ENCODE measurements at regions of chr1 and their contacts with region 1.

Region 1: DNA sequence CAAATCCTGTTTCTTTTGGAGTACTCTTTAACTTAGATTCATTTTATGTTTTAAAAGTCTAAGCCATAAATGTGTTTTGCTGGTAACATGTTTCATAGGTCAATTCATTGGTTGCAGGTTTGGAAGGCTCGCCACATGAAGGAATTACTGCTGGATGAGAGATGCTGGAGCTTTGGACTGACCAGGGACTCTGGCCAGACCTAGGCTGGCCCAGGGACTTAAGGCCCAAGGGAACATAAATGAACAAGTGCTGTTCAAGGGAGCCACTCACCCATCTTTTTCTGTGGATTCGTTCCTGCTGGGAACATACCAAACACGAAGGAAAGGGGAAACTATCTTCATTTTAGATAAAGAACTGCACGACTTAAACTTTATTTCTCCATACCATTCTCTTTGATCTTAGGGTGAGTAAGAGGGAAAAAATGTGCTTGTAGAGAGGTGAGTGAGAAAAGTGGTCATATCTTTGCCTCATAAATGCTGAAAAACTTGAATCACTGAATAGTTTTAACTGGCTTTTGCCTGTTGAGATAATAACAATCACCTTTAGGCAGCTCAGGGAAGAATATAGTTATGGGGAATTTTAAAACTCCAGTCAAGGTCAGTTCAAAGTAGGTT is 15.3 kb upstream of the SHCBP1L start:
- DNase-seq: no peak
- ATAC-seq: no peak
- H3K4me3 ChIP-seq: no peak overlapping the region
- H3K27ac ChIP-seq: no peak overlapping the region
- H3K4me1 ChIP-seq: peaks cover 0 to 2% (median 0%) of the 10 kb centered on the region in 12 donors
- H3K27me3 ChIP-seq: no peaks in the 10 kb centered on the region
- CTCF ChIP-seq: no peak
- POLR2A ChIP-seq: no peak

Region 2: GRCh38 chr1:182768963-182769362 is 199.3 kb before region 1 on chr1:
- intact Hi-C with region 1: no loop called
- DNase-seq: no peak
- ATAC-seq: peak in 1 of 4 donors; percentile 60
- H3K4me3 ChIP-seq: no peak overlapping the region
- H3K27ac ChIP-seq: peak overlapping the region in 3 of 12 donors; percentile 30 to 39 (median 32)
- H3K4me1 ChIP-seq: peaks cover 0 to 20% (median 0%) of the 10 kb centered on the region in 12 donors
- H3K27me3 ChIP-seq: no peaks in the 10 kb centered on the region
- CTCF ChIP-seq: no peak
- POLR2A ChIP-seq: no peak

Region 3: GRCh38 chr1:183012301-183012994 is 44.2 kb after region 1 on chr1:
- intact Hi-C with region 1: no loop called
- DNase-seq: no peak
- ATAC-seq: no peak
- H3K4me3 ChIP-seq: no peak overlapping the region
- H3K27ac ChIP-seq: no peak overlapping the region
- H3K4me1 ChIP-seq: peaks cover 0 to 7% (median 0%) of the 10 kb centered on the region in 12 donors
- H3K27me3 ChIP-seq: no peaks in the 10 kb centered on the region
- CTCF ChIP-seq: no peak
- POLR2A ChIP-seq: no peak

Region 4: GRCh38 chr1:183318433-183318832 is 350.2 kb after region 1 on chr1:
- intact Hi-C with region 1: loop called (anchors 2 to 5 kb)
- DNase-seq: peak; percentile 77 to 92 (median 82)
- ATAC-seq: peak; percentile 94 to 99 (median 97)
- H3K4me3 ChIP-seq: no peak overlapping the region
- H3K27ac ChIP-seq: peak overlapping the region; percentile 46 to 92 (median 82)
- H3K4me1 ChIP-seq: peaks cover 0 to 37% (median 25%) of the 10 kb centered on the region in 12 donors
- H3K27me3 ChIP-seq: no peaks in the 10 kb centered on the region
- CTCF ChIP-seq: peak; percentile 48 to 89 (median 72)
- POLR2A ChIP-seq: no peak